Panc1 (cell line): ENCODE measurements at regions of chr3 and their contacts with region 1.

Region 1: GRCh38 chr3:81080608-81081007 is 680.8 kb downstream of the GBE1 start:
- DNase-seq: no peak
- ATAC-seq: no peak
- H3K4me3 ChIP-seq: no peak overlapping the region
- H3K27ac ChIP-seq: no peak overlapping the region
- H3K4me1 ChIP-seq: no peaks in the 10 kb centered on the region
- H3K27me3 ChIP-seq: no peaks in the 10 kb centered on the region
- CTCF ChIP-seq: no peak

Region 2: DNA sequence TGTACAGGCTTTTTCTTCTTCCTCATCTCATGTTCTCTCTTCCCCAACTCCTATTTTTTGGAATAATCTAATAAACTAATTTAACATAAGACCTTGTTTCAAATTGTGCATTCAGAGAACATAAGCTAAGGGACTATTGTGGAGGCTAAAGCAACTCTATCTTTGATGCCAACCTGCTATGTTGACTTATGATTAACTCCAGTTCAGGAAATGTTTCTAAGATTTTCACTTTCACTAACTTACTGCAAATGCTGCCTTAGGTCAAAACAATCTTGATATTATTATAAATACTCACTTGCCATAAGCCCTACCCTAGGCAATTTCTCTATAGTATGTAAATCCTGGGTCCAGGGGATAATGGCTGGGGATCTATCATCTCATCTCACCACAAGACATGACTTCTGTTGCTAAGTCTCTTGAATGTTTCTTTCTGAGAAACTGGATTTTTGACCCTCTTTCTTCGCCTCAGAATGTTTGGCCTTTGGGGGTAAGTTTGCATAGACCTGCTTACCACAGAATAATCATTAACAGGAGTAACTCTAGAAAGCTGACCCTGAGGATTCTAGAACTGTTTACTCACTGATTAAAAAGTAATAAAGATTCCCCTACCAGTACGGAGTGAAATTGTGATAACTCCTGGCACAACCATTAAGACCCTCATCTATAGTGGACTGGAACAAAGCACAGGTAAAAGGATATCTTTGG is 87.2 kb before region 1 on chr3:
- CTCF ChIA-PET with region 1: no interaction called
- POLR2A ChIA-PET with region 1: no interaction called
- in situ Hi-C with region 1: no loop called
- intact Hi-C with region 1: no loop called
- DNase-seq: no peak
- ATAC-seq: no peak
- H3K4me3 ChIP-seq: no peak overlapping the region
- H3K27ac ChIP-seq: no peak overlapping the region
- H3K4me1 ChIP-seq: no peaks in the 10 kb centered on the region
- H3K27me3 ChIP-seq: no peaks in the 10 kb centered on the region
- CTCF ChIP-seq: no peak

Region 3: DNA sequence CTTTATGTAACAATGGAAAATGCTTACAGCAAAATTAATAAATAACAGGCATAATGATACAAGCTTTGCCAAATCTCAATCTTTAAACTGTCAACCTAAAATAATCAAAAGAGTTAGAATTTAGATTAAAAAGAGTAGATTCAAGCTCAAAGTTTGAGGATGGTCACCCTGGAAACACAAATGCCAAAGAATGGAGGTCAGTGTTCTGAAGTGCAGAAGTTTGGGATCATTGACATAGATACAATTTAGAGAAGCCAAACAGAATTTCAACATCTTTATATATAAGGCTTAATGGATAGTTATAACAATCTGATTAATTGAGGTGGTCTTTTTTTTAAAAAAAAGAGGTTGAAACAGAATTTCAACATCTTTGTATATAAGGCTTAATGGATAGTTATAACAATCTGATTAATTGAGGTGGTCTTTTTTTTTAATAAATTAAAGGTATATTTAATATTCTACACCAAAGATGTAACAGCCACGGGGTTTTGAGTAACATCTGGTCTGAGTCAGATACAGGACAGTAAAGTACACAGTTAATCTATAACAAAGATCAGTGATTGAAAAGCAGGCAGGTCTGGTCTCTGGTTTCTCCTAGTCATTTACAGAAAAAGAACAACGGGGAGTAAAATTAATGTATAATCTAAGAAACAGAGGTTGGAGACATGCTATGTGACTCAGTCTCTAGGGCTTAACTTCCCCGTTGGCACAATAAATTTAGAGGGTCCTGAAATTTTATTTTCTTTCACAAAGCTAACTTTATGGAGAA is 190.2 kb after region 1 on chr3:
- CTCF ChIA-PET with region 1: no interaction called
- POLR2A ChIA-PET with region 1: interaction called, 10 read pairs
- in situ Hi-C with region 1: no loop called
- intact Hi-C with region 1: no loop called
- DNase-seq: no peak
- ATAC-seq: no peak
- H3K4me3 ChIP-seq: no peak overlapping the region
- H3K27ac ChIP-seq: no peak overlapping the region
- H3K4me1 ChIP-seq: no peaks in the 10 kb centered on the region
- H3K27me3 ChIP-seq: no peaks in the 10 kb centered on the region
- CTCF ChIP-seq: no peak